ENCODE measurements at regions of chr15 and their contacts with region 1.

Region 1: GRCh38 chr15:101251830-101252820 is at the start of gene CHSY1:
- DNase-seq: peak; percentile 95
- ATAC-seq: peak; percentile 93 to 94
- H3K4me3 ChIP-seq: peak within 1 kb of the TSS; percentile 91
- H3K27ac ChIP-seq: peak within 1 kb of the TSS; percentile 86
- H3K4me1 ChIP-seq: peaks cover 45% of the 10 kb centered on the region
- H3K27me3 ChIP-seq: no peaks in the 10 kb centered on the region
- CTCF ChIP-seq: peak; percentile 25
- total RNA-seq, gene CHSY1: 25.6 TPM

Region 2: DNA sequence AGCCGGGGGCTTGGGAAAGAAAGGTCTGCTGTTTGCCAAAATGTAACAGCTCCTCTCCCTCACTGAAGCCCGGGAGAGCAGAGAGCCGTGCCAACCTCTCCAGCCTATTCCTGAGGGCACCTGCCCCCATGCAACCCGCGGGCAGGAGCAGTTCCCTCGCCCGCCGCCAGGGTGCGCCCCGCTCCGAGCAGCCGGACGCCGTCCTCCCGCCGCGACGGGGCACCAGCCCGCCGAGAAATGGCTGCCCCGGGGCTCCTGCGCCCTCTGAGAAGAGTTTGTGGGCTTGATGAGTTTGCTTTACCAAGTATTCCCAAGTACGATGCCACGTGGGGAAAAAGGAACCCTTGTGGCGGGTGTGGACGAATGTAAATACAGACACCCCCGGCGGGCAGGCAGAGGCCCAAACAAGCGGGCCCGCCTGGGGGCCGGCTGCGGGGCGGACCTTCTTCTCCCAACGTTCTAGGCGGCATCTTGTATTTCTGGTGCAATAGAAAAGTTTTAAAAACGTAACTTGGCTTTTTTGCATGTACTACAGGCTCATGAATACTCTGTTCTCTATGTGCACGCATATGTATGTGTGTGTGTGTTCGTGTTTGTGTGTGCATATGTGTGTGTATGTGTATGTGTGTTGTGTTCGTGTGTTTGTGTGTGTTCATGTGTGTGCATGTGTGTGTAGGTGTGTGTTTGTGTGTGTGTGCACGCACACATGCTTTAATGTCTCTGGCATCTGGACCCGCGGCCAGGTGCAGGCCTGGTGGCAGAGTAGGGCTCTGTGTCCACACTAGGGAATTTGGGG is 163.1 kb before region 1 on chr15:
- intact Hi-C with region 1: loop called (anchors 10 kb)
- DNase-seq: peak; percentile 83
- ATAC-seq: peak; percentile 91
- H3K4me3 ChIP-seq: peak overlapping the region; percentile 27
- H3K27ac ChIP-seq: no peak overlapping the region
- H3K4me1 ChIP-seq: peaks cover 35% of the 10 kb centered on the region
- H3K27me3 ChIP-seq: no peaks in the 10 kb centered on the region
- CTCF ChIP-seq: peak; percentile 100

Region 3: DNA sequence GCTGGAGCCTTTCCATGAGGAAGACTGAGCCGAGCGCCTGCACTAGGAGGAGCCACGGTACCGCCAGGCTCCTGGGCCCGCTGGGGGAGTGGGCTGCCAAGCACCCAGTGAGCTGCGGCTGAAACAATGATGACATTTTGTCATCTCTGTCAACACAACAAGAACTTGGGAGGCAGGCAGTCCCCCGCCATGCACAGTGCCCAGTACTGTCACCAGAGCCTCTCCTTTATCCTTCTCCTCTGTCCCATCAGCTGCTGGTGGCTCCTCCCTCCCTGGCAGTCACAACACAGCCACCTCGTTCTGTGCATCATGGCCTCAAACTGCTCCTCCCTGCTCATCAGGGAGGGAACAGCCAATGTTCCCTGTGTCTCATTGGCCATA is 271.4 kb after region 1 on chr15:
- intact Hi-C with region 1: no loop called
- DNase-seq: no peak
- ATAC-seq: no peak
- H3K4me3 ChIP-seq: no peak overlapping the region
- H3K27ac ChIP-seq: no peak overlapping the region
- H3K4me1 ChIP-seq: peaks cover 14% of the 10 kb centered on the region
- H3K27me3 ChIP-seq: no peaks in the 10 kb centered on the region
- CTCF ChIP-seq: no peak